ENCODE measurements at regions of chr4 and their contacts with region 1.

Region 1: GRCh38 chr4:101288365-101289145 is 58.8 kb downstream of the PPP3CA start:
- DNase-seq: no peak
- H3K4me3 ChIP-seq: no peak overlapping the region
- H3K4me3 Mint-ChIP-seq: peak overlapping the region in 1 of 8 donors; percentile 44
- H3K27ac ChIP-seq: no peak overlapping the region
- H3K27ac Mint-ChIP-seq: peak overlapping the region in 3 of 7 donors; percentile 71 to 85 (median 76)
- H3K4me1 ChIP-seq: peaks cover 62% of the 10 kb centered on the region
- H3K4me1 Mint-ChIP-seq: peaks cover 48 to 86% (median 73%) of the 10 kb centered on the region in 4 donors
- H3K27me3 ChIP-seq: no peaks in the 10 kb centered on the region
- H3K27me3 Mint-ChIP-seq: no peaks in the 10 kb centered on the region

Region 2: GRCh38 chr4:100949350-100949935 is 339.1 kb before region 1 on chr4:
- CTCF ChIA-PET with region 1: no interaction called
- POLR2A ChIA-PET with region 1: no interaction called
- intact Hi-C with region 1: no loop called
- DNase-seq: no peak
- H3K4me3 ChIP-seq: no peak overlapping the region
- H3K4me3 Mint-ChIP-seq: no peak overlapping the region
- H3K27ac ChIP-seq: no peak overlapping the region
- H3K27ac Mint-ChIP-seq: no peak overlapping the region
- H3K4me1 ChIP-seq: no peaks in the 10 kb centered on the region
- H3K4me1 Mint-ChIP-seq: no peaks in the 10 kb centered on the region
- H3K27me3 ChIP-seq: no peaks in the 10 kb centered on the region
- H3K27me3 Mint-ChIP-seq: peaks cover 0 to 8% of the 10 kb centered on the region in 2 donors

Region 3: GRCh38 chr4:101232074-101232776 is 56.3 kb before region 1 on chr4:
- CTCF ChIA-PET with region 1: no interaction called
- POLR2A ChIA-PET with region 1: no interaction called
- intact Hi-C with region 1: no loop called
- DNase-seq: no peak
- H3K4me3 ChIP-seq: no peak overlapping the region
- H3K4me3 Mint-ChIP-seq: no peak overlapping the region
- H3K27ac ChIP-seq: no peak overlapping the region
- H3K27ac Mint-ChIP-seq: no peak overlapping the region
- H3K4me1 ChIP-seq: no peaks in the 10 kb centered on the region
- H3K4me1 Mint-ChIP-seq: peaks cover 18 to 35% (median 27%) of the 10 kb centered on the region in 4 donors
- H3K27me3 ChIP-seq: no peaks in the 10 kb centered on the region
- H3K27me3 Mint-ChIP-seq: no peaks in the 10 kb centered on the region

Region 4: GRCh38 chr4:101306225-101306624 is 17.7 kb after region 1 on chr4:
- CTCF ChIA-PET with region 1: interaction called, 6 read pairs
- POLR2A ChIA-PET with region 1: no interaction called
- intact Hi-C with region 1: loop called (anchors 2 kb)
- DNase-seq: no peak
- H3K4me3 ChIP-seq: no peak overlapping the region
- H3K4me3 Mint-ChIP-seq: peak overlapping the region in 7 of 8 donors; percentile 45 to 76 (median 70)
- H3K27ac ChIP-seq: no peak overlapping the region
- H3K27ac Mint-ChIP-seq: peak overlapping the region in 5 of 7 donors; percentile 36 to 82 (median 75)
- H3K4me1 ChIP-seq: peaks cover 41% of the 10 kb centered on the region
- H3K4me1 Mint-ChIP-seq: peaks cover 32 to 65% (median 42%) of the 10 kb centered on the region in 4 donors
- H3K27me3 ChIP-seq: no peaks in the 10 kb centered on the region
- H3K27me3 Mint-ChIP-seq: no peaks in the 10 kb centered on the region

Region 5: GRCh38 chr4:101328063-101328602 is 39.6 kb after region 1 on chr4:
- CTCF ChIA-PET with region 1: no interaction called
- POLR2A ChIA-PET with region 1: no interaction called
- intact Hi-C with region 1: loop called (anchors 5 kb)
- DNase-seq: peak; percentile 63 to 77 (median 70)
- H3K4me3 ChIP-seq: no peak overlapping the region
- H3K4me3 Mint-ChIP-seq: peak overlapping the region; percentile 76 to 91 (median 83)
- H3K27ac ChIP-seq: peak overlapping the region; percentile 42
- H3K27ac Mint-ChIP-seq: peak overlapping the region; percentile 84 to 97 (median 92)
- H3K4me1 ChIP-seq: peaks cover 48% of the 10 kb centered on the region
- H3K4me1 Mint-ChIP-seq: peaks cover 44 to 95% (median 73%) of the 10 kb centered on the region in 4 donors
- H3K27me3 ChIP-seq: no peaks in the 10 kb centered on the region
- H3K27me3 Mint-ChIP-seq: no peaks in the 10 kb centered on the region

Measured in CD4-positive, alpha-beta memory T cell (primary cell).